ENCODE measurements at regions of chr2 and their contacts with region 1.

Region 1: DNA sequence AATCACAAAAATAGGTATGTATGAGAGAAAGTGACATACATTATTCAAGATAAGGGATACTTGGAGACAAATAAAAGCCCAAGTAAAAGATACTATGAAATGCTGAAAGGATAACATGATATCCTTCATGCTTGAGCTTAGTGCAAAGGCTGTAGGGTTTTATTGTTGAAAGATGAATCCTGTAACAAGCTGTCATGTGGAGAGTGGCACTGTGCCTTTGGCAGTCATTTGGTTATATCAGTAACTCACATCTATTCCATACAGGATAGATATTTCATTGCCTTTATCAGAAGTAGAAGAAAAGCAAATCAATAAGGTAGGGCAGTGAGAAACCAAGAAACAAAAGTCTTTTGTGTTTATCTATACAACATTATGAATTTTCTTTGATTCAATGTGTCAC is 211.0 kb downstream of the ZNF385B start:
- DNase-seq: no peak
- H3K4me3 ChIP-seq: no peak overlapping the region
- CTCF ChIP-seq: no peak

Region 2: DNA sequence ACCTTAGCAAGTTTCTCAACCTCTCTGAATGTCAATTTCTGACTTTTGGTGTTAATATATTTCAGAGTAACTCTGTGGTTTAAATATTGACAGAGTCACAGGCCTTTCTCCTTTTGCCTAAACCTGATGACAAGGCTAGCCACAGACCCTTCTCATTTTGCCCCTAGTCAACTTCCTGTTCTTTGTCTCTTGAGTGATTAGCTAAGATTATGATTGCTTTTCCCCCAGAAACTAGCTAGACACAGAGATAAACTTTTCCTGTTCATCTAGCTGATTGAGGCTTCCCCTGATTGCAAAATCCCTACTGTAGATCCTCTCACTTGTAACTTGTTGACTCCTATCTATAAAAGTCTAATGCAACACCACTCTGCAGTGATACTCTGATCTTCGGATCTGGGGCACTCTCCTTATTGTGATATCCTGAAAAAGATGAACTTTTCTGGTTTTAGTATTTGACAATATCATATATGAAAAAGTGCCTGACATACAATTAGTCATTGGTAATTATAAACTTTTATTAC is 30.4 kb before region 1 on chr2:
- in situ Hi-C with region 1: loop called (anchors 5 kb)
- DNase-seq: no peak
- H3K4me3 ChIP-seq: no peak overlapping the region
- CTCF ChIP-seq: no peak